ENCODE measurements at regions of chr17 and their contacts with region 1.

Region 1: DNA sequence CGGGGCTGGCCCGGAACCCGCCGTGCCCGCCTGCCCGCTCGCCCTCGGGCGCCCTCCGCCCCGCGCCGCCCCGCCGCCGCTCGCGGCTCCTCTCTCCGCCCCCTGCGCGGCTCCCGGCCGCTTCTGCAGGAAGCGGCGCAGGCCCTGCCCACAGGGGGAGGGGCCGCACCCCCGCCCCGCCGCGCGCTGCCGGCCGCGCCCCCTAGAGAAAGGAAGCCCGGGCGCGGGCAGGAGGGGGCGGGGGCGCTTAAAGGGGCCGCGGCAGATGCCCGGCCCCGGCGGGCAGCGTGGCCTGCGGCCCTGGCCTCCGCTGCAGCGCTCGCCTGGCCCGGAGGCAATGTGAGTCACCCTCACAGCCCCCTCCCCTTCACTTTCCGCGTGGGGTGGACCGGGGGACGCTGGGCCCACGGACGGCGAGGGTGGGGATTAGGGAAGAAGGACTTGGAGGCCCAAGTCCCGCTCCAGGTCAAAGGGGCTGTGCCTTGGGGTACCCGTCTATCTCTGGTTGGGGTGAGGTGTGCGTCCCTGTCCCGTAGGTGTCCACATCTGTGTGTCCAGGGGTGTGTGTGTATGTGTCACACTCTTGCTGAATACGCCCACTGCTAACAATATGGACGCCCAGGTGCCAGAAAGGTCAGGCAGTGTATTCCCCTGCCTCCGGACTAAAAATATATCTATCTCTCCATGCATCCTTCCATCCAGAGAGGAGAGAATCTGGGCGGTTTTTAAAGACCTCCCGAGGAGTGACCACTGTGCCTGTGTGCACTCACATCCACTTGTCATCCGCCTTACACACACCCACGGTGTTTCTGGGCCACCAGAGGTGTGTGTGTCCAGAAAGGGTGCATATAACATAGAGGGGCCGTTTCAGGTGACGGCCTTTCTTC is at the start of gene GIT1:
- DNase-seq: no peak
- H3K4me3 ChIP-seq: peak within 1 kb of the TSS; percentile 82
- CTCF ChIP-seq: no peak

Region 2: GRCh38 chr17:29420128-29420527 is 169.6 kb before region 1 on chr17:
- CTCF ChIA-PET with region 1: no interaction called
- POLR2A ChIA-PET with region 1: no interaction called
- DNase-seq: no peak
- H3K4me3 ChIP-seq: no peak overlapping the region
- CTCF ChIP-seq: no peak

Region 3: GRCh38 chr17:29608891-29609361 is 19.2 kb after region 1 on chr17:
- CTCF ChIA-PET with region 1: interaction called, 210 read pairs
- POLR2A ChIA-PET with region 1: no interaction called
- DNase-seq: no peak
- H3K4me3 ChIP-seq: no peak overlapping the region
- CTCF ChIP-seq: no peak